Psoas muscle (tissue), 8 donors: ENCODE measurements at regions of chrX and their contacts with region 1.

Region 1: DNA sequence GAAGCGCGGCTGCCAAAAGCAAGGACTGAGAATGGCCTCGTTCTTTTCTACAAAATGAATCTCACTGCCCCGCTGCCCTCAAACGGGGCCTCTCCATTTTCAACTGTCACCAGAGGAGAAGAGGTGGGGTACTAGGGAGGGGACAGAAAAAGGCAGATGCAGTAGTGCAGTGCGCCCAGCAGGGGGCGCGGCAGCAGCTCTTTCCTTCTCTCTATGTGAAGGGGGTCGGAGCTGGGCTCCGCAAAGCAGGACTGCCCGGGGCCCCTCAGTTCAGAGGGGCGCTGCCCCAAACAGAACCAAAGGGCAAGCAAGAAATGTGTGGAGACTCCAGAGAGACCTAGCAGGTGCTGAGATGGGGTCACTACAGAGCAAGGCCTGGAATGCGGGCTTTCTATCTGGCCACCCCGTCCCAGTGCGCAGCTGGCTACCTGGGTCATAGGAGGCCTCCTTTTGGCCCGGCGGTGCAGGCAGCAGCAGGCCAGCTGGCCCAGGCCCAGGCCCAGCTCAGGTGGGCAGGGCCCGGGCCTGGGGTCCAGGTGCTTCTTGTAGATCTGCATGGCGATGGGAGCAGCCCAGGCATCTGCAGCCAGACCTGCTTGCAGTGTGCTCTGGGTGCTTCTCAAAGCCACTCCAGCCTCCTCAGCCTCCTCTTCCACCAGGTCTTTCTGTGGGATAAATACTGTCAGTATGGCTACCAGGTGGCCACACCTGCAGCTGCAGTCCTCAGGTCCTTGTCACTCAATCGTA is 5.9 kb downstream of the IRAK1 start:
- DNase-seq: peak in 1 of 2 donors; percentile 71
- ATAC-seq: peak; percentile 48 to 68 (median 60)
- H3K4me3 ChIP-seq: no peak overlapping the region
- H3K27ac ChIP-seq: no peak overlapping the region
- H3K4me1 ChIP-seq: peaks cover 8% of the 10 kb centered on the region
- H3K27me3 ChIP-seq: peaks cover 0 to 16% (median 0%) of the 10 kb centered on the region in 3 donors
- CTCF ChIP-seq: peak; percentile 89

Region 2: GRCh38 chrX:153361781-153362397 is 651.9 kb before region 1 on chrX:
- intact Hi-C with region 1: no loop called
- DNase-seq: no peak
- ATAC-seq: no peak
- H3K4me3 ChIP-seq: no peak overlapping the region
- H3K27ac ChIP-seq: no peak overlapping the region
- H3K4me1 ChIP-seq: no peaks in the 10 kb centered on the region
- H3K27me3 ChIP-seq: no peaks in the 10 kb centered on the region
- CTCF ChIP-seq: no peak

Region 3: DNA sequence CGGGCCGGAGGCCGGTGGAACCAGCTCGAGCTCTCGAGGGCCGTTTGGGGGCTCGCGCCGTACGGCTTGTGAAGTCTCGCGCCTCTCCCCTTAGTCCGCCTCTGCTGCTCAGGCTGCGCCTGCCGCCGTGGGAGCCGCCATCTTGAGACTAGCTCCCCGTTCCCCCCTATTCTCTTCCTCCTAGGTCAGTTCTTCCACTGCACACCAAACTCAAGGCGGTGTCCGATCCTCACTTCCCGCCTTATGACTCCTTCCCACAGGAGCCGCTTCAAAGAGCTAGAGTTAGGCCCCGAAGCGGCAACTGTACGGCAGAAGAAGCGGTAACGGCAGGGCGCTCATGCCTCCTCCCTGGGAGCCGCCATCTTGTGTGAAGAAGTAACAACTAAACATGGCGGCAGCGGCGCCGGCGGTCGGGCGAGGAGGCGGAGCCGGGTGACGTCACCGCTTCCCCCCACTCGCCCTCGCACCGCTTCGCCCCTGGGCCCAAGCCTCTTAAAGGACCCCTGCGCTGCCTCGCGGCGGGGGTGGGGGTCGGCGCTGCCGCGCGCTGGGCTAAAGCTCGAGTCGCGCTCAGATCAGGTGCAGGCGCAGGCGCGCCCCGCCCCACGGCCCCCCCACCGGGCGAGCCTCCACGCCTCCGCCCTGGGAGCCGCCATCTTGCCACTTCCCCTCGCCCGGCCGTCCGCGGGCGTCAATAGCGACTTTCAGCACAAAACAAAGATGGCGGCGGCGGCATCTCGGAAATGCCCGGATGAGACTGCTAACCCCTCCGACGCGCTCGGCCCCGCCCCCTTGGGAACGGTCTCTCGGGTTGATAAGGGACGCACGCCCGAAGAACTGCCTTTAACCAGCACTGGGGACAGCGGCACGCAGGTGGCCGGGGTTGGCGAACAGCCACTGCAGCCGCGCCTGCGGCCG is 42.1 kb before region 1 on chrX and contains the start of gene HCFC1:
- intact Hi-C with region 1: loop called in 1 of 2 experiments (anchors 5 kb)
- DNase-seq: peak; percentile 95 to 98
- ATAC-seq: peak; percentile 75 to 80 (median 79)
- H3K4me3 ChIP-seq: peak within 1 kb of the TSS; percentile 80
- H3K27ac ChIP-seq: peak within 1 kb of the TSS; percentile 97
- H3K4me1 ChIP-seq: peaks cover 41% of the 10 kb centered on the region
- H3K27me3 ChIP-seq: no peaks in the 10 kb centered on the region
- CTCF ChIP-seq: no peak
- total RNA-seq, gene HCFC1: 29.8 to 50.1 (median 40.0) TPM

Region 4: DNA sequence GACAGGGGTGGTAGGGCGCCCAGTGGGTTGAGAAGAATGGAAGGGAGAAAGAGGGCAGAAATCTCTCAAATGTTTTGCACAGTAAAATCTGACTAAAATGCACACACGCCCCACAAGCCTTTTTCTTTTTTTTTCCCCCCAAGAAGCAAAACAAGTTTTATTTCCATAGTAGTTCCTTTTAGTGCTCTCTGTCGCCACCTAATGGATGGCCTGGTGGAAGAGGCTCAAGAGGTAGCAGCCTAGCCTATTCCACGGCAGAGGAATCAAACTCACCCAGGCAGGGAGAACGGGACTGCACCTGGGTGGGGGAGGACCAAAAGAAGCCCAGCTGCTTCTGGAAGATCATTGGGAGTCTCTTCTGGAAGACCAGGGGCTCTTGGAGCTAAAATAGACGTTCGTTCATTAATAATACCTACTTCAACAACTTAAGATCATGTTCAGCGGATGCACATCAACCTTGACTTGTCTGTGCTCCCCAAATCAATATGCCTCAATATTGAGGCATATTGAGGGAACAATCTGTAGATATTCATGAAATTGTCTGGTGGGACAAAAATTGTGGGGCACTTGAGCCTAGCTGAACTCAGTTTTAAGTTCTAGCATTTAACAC is 37.5 kb after region 1 on chrX:
- intact Hi-C with region 1: loop called (anchors 2 to 5 kb)
- DNase-seq: peak; percentile 58 to 73
- ATAC-seq: peak; percentile 43 to 65 (median 56)
- H3K4me3 ChIP-seq: no peak overlapping the region
- H3K27ac ChIP-seq: no peak overlapping the region
- H3K4me1 ChIP-seq: peaks cover 43% of the 10 kb centered on the region
- H3K27me3 ChIP-seq: peaks cover 0 to 28% (median 0%) of the 10 kb centered on the region in 3 donors
- CTCF ChIP-seq: peak; percentile 75

Region 5: DNA sequence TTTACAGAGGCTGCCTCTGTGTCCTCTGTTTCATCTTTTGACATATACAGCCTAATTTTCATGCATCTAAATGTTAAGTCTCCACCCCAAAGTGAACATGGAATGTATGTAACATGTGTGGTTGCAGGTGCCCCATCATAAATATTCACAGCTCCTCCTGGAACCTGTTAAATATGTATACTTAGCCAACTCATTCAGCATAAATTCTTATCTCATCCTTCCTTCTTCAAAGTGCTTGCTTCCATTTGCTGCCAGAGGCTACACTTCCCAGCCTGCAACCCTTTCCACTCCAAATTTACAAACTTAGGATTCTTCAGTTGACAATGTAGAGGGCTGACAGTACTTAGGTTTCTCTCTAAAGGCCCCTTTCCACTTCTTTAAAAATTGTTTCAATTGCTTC is 948.2 kb after region 1 on chrX:
- intact Hi-C with region 1: no loop called
- DNase-seq: no peak
- ATAC-seq: no peak
- H3K4me3 ChIP-seq: no peak overlapping the region
- H3K27ac ChIP-seq: no peak overlapping the region
- H3K4me1 ChIP-seq: no peaks in the 10 kb centered on the region
- H3K27me3 ChIP-seq: no peaks in the 10 kb centered on the region
- CTCF ChIP-seq: no peak